Activated naive CD4-positive, alpha-beta T cell treated with anti-CD3 and anti-CD28 coated beads for 36 hours (primary cell): ENCODE measurements at regions of chr9 and their contacts with region 1.

Region 1: GRCh38 chr9:128007566-128008138 is 26.9 kb upstream of the EEIG1 start:
- DNase-seq: peak; percentile 97
- H3K4me3 Mint-ChIP-seq: peak overlapping the region; percentile 85
- H3K27ac Mint-ChIP-seq: peak overlapping the region; percentile 94
- H3K4me1 Mint-ChIP-seq: peaks cover 52% of the 10 kb centered on the region
- H3K27me3 Mint-ChIP-seq: no peaks in the 10 kb centered on the region

Region 2: DNA sequence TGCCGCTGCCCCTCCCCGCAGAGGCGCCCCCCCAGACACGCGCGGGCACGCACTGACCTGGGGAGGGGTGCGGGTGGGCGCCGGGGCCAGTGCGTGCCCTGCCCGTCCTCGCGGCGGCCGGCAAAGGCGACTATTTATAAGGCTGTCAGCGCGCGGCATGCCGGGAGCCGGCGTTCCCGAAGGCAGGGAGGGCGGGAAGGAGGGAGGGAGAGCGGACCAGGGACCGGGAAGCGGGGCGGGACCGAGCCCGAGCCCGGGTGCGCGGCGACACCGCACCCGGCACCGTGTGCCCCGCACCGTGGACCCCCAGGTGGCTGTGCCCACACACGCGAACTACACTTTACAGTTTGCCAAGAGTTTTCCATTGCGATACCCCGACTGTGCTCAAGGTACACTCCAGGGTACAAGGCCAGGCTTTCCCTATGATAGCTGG is 130.1 kb before region 1 on chr9 and contains the start of gene AK1:
- CTCF ChIA-PET with region 1: no interaction called
- intact Hi-C with region 1: no loop called
- DNase-seq: no peak
- H3K4me3 Mint-ChIP-seq: no peak within 1 kb of the TSS
- H3K27ac Mint-ChIP-seq: no peak within 1 kb of the TSS
- H3K4me1 Mint-ChIP-seq: peaks cover 6% of the 10 kb centered on the region
- H3K27me3 Mint-ChIP-seq: peaks cover 4% of the 10 kb centered on the region
- total RNA-seq, gene AK1: 11.8 to 11.9 TPM

Region 3: GRCh38 chr9:127970401-127971313 is 37.0 kb before region 1 on chr9:
- CTCF ChIA-PET with region 1: interaction called, 4 read pairs
- intact Hi-C with region 1: loop called (anchors 2 kb)
- DNase-seq: peak; percentile 93
- H3K4me3 Mint-ChIP-seq: peak overlapping the region; percentile 72
- H3K27ac Mint-ChIP-seq: peak overlapping the region; percentile 99
- H3K4me1 Mint-ChIP-seq: peaks cover 96% of the 10 kb centered on the region
- H3K27me3 Mint-ChIP-seq: no peaks in the 10 kb centered on the region

Region 4: GRCh38 chr9:128026773-128027541 is 19.3 kb after region 1 on chr9:
- CTCF ChIA-PET with region 1: interaction called, 8 read pairs
- intact Hi-C with region 1: loop called (anchors 1 kb)
- DNase-seq: peak; percentile 80
- H3K4me3 Mint-ChIP-seq: peak overlapping the region; percentile 80
- H3K27ac Mint-ChIP-seq: peak overlapping the region; percentile 98
- H3K4me1 Mint-ChIP-seq: peaks cover 90% of the 10 kb centered on the region
- H3K27me3 Mint-ChIP-seq: no peaks in the 10 kb centered on the region